HepG2 (cell line): ENCODE measurements at regions of chr9 and their contacts with region 1.

Region 1: DNA sequence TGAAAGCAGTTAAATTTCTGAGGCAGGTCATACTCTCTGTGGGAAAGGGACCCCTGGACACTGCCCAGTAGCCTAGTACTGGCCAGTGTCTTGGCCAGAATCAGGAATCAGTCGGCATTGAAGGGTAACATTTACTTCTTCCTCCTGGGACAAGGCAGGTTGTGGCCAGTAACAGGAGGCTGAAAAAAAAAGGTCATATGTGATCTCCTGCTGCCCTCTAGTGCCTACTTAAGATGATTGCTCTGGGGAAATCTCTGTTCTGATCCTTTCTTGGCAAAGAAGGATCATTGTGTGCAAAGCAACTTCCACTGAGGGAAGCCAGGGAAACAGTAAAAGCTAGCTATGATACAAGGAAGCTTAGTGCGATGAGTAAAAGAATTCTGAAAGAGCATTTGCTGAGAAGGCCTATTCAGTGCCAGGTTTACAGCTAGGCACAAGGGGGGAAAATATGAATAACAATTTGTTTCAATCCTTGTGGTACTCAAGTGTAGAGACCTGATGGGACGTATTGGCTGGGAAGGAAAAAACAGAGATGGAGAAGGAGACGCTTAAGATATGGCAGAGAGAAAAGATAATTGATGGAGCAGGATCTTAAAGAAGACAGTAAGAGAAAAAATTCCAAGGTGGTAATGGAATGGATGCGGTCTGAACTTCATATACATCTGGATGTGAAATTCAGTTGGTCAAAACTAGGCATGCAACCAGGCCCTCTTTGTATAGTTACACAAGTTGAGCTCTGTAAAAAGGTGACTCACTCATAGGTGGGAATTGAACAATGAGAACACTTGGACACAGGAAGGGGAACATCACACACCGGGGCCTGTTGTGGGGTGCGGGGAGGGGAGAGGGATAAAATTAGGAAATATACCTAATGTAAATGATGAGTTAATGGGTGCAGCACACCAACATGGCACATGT is 25.8 kb upstream of the TRIM32 start:
- DNase-seq: peak; percentile 57
- ATAC-seq: peak; percentile 89
- H3K4me3 ChIP-seq: no peak overlapping the region
- H3K27ac ChIP-seq: no peak overlapping the region
- H3K4me1 ChIP-seq: peaks cover 8% of the 10 kb centered on the region; the same call in 1 of the 2 replicates
- H3K27me3 ChIP-seq: no peaks in the 10 kb centered on the region
- CTCF ChIP-seq: peak; percentile 84
- EP300 ChIP-seq: no peak
- POLR2A ChIP-seq: no peak
- RAD21 ChIP-seq: peak; percentile 71

Region 2: GRCh38 chr9:115591584-115591984 is 1069.7 kb before region 1 on chr9:
- CTCF ChIA-PET with region 1: interaction called, 3 read pairs
- POLR2A ChIA-PET with region 1: no interaction called
- in situ Hi-C with region 1: loop called (anchors 10 kb)
- intact Hi-C with region 1: loop called (anchors 2 kb)
- DNase-seq: peak; percentile 74
- ATAC-seq: peak; percentile 98
- H3K4me3 ChIP-seq: no peak overlapping the region
- H3K27ac ChIP-seq: no peak overlapping the region
- H3K4me1 ChIP-seq: no peaks in the 10 kb centered on the region
- H3K27me3 ChIP-seq: no peaks in the 10 kb centered on the region
- CTCF ChIP-seq: peak; percentile 70
- EP300 ChIP-seq: no peak
- POLR2A ChIP-seq: no peak
- RAD21 ChIP-seq: 0 out of 2 replicates have a peak, but pooled peaks have one; percentile 28

Region 3: DNA sequence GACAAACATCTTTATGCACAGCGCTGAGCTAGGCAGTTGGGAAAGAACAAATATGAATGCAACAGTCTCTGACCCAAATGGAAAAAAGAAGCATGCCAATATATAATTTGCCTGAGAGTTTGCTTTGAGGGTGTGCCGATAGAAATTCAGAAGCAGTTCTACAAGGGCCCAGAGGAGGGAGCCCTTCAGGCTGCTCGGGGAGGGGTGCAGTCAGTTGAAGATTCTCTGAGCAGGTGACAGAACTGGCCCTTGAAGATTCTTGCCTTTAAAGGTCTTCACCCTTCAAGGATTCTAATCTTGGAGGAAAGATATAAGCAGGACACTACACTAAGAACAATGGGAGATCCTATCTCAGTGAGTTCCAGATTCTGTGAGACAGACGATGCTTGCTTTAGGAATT is 511.5 kb before region 1 on chr9:
- CTCF ChIA-PET with region 1: interaction called, 4 read pairs
- POLR2A ChIA-PET with region 1: no interaction called
- in situ Hi-C with region 1: loop called (anchors 5 kb)
- intact Hi-C with region 1: loop called (anchors 1 kb)
- DNase-seq: no peak
- ATAC-seq: peak; percentile 77
- H3K4me3 ChIP-seq: no peak overlapping the region
- H3K27ac ChIP-seq: no peak overlapping the region
- H3K4me1 ChIP-seq: no peaks in the 10 kb centered on the region
- H3K27me3 ChIP-seq: peaks cover 3 to 15% of the 10 kb centered on the region in 2 experiments; a peak in 3 of 5 replicates
- CTCF ChIP-seq: peak; percentile 69
- EP300 ChIP-seq: no peak
- POLR2A ChIP-seq: no peak
- RAD21 ChIP-seq: no peak

Region 4: DNA sequence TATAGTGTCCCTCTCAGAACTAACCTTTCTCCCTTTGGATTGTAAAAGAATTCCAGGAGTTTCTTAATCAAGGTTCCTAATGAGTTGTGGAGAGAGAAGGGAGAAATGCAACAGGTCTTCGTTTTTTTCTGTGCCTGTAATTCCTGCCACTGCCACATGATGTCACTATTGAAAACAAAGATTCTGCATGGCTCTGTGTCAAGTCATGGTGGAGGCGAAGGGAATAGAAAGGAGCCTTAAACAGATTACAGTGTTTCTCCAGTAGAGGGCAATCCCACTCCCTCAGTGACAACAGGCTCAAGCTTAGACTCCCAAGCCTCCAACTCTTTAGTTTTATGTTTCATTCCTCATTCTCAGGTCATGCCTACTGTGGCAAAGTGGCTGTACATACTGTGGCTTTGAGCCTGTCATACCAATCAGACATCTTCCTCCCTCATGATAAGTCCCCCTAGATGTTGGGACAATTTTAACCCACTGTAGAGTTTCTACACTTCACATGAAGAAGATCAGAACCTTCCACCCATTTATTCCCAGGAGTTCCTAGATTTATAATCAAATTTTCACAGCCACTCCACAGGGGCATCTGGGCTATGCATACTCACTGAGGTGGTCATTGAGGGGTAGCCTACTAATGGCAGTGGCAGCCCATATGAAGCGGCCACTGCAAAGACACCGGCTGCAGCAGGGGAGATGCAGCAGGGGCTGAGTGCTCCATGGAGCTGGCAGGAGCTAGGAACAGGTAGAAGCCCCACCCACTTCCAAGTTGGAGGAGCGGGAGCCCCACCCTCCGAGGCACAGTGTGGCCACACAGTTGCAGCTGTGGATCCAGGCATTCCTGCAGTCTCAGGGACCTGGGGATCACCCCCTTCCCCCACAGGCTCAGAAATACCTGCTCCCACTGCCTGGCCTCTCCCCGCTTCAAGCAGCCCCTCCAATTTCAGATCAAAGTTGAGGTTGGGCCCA is 71.6 kb before region 1 on chr9:
- CTCF ChIA-PET with region 1: interaction called, 34 read pairs
- POLR2A ChIA-PET with region 1: no interaction called
- in situ Hi-C with region 1: no loop called
- intact Hi-C with region 1: loop called (anchors 1 kb)
- DNase-seq: peak; percentile 79
- ATAC-seq: peak; percentile 98
- H3K4me3 ChIP-seq: no peak overlapping the region
- H3K27ac ChIP-seq: no peak overlapping the region
- H3K4me1 ChIP-seq: no peaks in the 10 kb centered on the region
- H3K27me3 ChIP-seq: no peaks in the 10 kb centered on the region
- CTCF ChIP-seq: peak; percentile 75
- EP300 ChIP-seq: no peak
- POLR2A ChIP-seq: no peak
- RAD21 ChIP-seq: peak; percentile 53; the same call in 1 of the 2 replicates

Region 5: DNA sequence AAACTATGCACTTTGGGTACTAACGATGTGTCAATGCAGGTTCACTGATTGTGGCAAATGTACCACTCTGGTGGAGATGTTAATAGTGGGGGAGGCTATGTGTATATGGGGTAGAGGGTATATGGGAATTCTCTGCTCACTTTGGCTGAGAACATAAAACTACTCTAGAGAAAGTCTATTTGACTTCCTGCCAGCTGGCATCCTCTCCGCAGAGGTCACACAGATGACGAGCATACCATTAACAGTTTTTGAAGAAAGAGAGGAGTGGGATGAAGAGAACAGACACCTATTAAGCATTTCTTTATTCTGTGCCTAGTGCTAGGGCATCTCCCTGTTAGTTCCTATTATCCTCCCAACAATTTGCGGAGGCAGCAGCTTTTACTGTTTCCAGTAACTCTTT is 32.6 kb before region 1 on chr9:
- CTCF ChIA-PET with region 1: no interaction called
- POLR2A ChIA-PET with region 1: no interaction called
- in situ Hi-C with region 1: no loop called
- intact Hi-C with region 1: loop called (anchors 1 kb)
- DNase-seq: no peak
- ATAC-seq: no peak
- H3K4me3 ChIP-seq: no peak overlapping the region
- H3K27ac ChIP-seq: no peak overlapping the region
- H3K4me1 ChIP-seq: no peaks in the 10 kb centered on the region
- H3K27me3 ChIP-seq: no peaks in the 10 kb centered on the region
- CTCF ChIP-seq: no peak
- EP300 ChIP-seq: no peak
- POLR2A ChIP-seq: no peak
- RAD21 ChIP-seq: no peak

Region 6: DNA sequence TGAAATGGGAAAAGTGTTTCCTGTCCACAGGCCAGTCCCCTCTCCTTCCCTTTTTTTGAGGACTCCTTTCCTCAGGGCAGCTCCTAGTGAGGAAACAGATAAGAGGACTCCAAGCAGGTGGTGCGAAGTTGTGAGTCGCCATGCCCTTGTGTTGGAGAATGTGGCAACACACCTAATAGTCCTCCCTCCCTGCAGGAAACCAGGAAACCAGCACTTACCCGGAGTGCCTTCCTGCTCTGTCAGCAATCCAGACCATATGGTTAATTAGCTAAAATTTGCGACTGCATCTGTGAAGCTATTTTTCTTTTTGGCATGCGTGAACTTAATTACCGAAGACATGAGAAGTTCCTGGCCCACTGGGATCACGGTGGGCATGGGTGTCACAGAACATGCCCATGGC is 95.7 kb after region 1 on chr9:
- CTCF ChIA-PET with region 1: no interaction called
- POLR2A ChIA-PET with region 1: no interaction called
- in situ Hi-C with region 1: no loop called
- intact Hi-C with region 1: no loop called
- DNase-seq: no peak
- ATAC-seq: no peak
- H3K4me3 ChIP-seq: no peak overlapping the region
- H3K27ac ChIP-seq: no peak overlapping the region
- H3K4me1 ChIP-seq: no peaks in the 10 kb centered on the region
- H3K27me3 ChIP-seq: no peaks in the 10 kb centered on the region
- CTCF ChIP-seq: no peak
- EP300 ChIP-seq: no peak
- POLR2A ChIP-seq: no peak
- RAD21 ChIP-seq: no peak

Region 7: DNA sequence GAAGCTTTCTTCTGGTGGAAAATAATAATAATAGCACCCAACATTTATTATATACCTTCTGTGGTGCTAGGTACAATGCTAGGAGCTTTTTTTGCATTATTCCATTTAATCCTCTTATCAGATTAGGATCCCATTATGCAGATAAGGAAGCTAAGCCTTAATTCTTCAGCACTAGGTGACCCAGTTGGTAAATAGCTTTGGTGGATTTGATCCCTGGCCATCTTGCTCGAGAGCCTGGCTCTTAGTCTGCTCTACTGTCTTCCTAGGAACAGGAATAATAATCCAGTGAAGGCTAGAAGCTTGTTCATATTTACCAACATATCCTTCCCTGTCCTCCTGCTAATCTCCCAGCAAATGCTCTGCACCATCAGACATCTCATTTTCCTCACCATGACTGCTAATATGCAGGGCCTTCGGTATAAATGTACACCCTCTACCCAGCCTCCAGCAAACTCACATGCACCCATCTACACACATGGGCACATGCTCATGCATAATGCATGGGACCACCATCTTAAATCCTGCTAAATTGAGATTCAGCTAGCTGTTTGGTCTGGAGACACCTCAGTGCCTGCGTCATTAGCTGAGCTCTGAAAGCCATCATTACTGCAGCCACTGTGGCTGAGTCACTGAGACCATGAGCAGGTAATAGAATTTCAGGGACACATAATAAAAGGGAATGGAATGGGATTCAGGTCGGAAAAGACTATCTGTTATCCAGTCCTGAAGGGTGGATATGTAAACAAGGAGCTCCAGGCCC is 113.3 kb after region 1 on chr9:
- CTCF ChIA-PET with region 1: no interaction called
- POLR2A ChIA-PET with region 1: no interaction called
- in situ Hi-C with region 1: no loop called
- intact Hi-C with region 1: no loop called
- DNase-seq: no peak
- ATAC-seq: no peak
- H3K4me3 ChIP-seq: no peak overlapping the region
- H3K27ac ChIP-seq: no peak overlapping the region
- H3K4me1 ChIP-seq: no peaks in the 10 kb centered on the region
- H3K27me3 ChIP-seq: no peaks in the 10 kb centered on the region
- CTCF ChIP-seq: no peak
- EP300 ChIP-seq: no peak
- POLR2A ChIP-seq: no peak
- RAD21 ChIP-seq: no peak